ENCODE measurements at regions of chr6 and their contacts with region 1.

Region 1: GRCh38 chr6:135535989-135536414 is 38.5 kb upstream of the AHI1 start:
- DNase-seq: peak; percentile 78
- ATAC-seq: peak; percentile 48
- H3K4me3 ChIP-seq: no peak overlapping the region
- H3K27ac ChIP-seq: no peak overlapping the region
- H3K4me1 ChIP-seq: peaks cover 34% of the 10 kb centered on the region
- H3K27me3 ChIP-seq: no peaks in the 10 kb centered on the region
- CTCF ChIP-seq: peak; percentile 74

Region 2: GRCh38 chr6:135451693-135452092 is 84.3 kb before region 1 on chr6:
- CTCF ChIA-PET with region 1: no interaction called
- POLR2A ChIA-PET with region 1: no interaction called
- intact Hi-C with region 1: loop called (anchors 1 kb)
- DNase-seq: peak; percentile 68
- ATAC-seq: no peak
- H3K4me3 ChIP-seq: no peak overlapping the region
- H3K27ac ChIP-seq: no peak overlapping the region
- H3K4me1 ChIP-seq: no peaks in the 10 kb centered on the region
- H3K27me3 ChIP-seq: no peaks in the 10 kb centered on the region
- CTCF ChIP-seq: peak; percentile 71

Region 3: DNA sequence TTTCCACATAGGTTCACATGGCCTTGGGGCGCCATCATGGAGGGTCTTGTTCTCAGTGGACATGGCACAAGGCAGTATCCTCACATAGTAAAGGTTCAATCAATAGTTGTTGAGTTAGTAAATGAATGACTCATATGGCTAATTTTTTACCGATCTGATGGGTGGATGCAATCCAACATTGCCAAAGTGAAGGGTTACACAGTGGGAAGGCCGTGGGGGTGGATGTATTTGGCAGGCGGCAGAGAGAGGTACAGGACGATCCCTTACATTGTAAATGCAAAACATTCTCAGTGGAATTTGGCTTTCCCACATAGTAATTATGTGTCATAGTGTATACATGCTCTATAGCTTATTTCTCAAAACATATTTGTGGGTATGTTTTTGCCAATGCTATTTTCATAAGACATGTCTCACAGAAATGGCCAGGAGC is 294.5 kb after region 1 on chr6:
- CTCF ChIA-PET with region 1: no interaction called
- POLR2A ChIA-PET with region 1: no interaction called
- intact Hi-C with region 1: loop called (anchors 5 kb)
- DNase-seq: peak; percentile 68
- ATAC-seq: peak; percentile 43
- H3K4me3 ChIP-seq: no peak overlapping the region
- H3K27ac ChIP-seq: peak overlapping the region; percentile 16; the same call in 1 of the 2 replicates
- H3K4me1 ChIP-seq: 0 out of 2 replicates have a peak, but pooled peaks cover 10% of the 10 kb centered on the region
- H3K27me3 ChIP-seq: no peaks in the 10 kb centered on the region
- CTCF ChIP-seq: no peak

Region 4: DNA sequence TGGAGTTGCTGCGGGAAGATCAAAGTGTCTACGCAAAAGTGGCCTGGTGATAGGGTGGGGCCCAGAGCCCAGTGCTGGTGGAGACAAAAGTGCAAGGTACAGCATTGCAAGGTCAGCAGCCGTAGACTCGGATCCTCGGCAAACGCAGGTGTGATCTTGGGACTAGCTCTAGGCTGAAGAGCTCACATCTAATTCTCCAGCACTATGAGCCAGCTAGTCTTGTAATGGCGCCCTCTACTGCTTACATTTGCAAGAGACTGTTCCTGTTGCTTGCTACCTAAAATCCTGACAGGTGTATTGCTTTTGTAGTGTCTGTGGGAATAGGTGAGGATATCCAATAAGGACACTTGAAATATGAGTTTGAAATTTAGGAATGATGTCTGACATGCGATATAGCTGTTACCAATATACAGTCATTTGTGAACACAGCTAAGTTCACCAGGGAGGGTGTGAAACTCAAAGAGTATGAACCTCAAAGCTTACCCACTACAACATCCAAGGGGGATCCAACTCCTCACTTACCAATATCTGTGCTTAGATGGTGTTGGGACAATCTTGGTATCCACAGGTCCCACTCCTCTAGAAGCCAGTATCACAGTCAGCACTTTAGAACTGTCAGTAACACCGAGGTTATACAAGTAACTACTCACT is 373.9 kb after region 1 on chr6:
- CTCF ChIA-PET with region 1: no interaction called
- POLR2A ChIA-PET with region 1: no interaction called
- intact Hi-C with region 1: loop called (anchors 2 kb)
- DNase-seq: peak; percentile 74
- ATAC-seq: peak; percentile 59
- H3K4me3 ChIP-seq: no peak overlapping the region
- H3K27ac ChIP-seq: no peak overlapping the region
- H3K4me1 ChIP-seq: peaks cover 2% of the 10 kb centered on the region
- H3K27me3 ChIP-seq: no peaks in the 10 kb centered on the region
- CTCF ChIP-seq: peak; percentile 70

Region 5: GRCh38 chr6:135962731-135963130 is 426.7 kb after region 1 on chr6:
- CTCF ChIA-PET with region 1: no interaction called
- POLR2A ChIA-PET with region 1: no interaction called
- intact Hi-C with region 1: no loop called
- DNase-seq: no peak
- ATAC-seq: no peak
- H3K4me3 ChIP-seq: no peak overlapping the region
- H3K27ac ChIP-seq: no peak overlapping the region
- H3K4me1 ChIP-seq: no peaks in the 10 kb centered on the region
- H3K27me3 ChIP-seq: no peaks in the 10 kb centered on the region
- CTCF ChIP-seq: no peak

Region 6: DNA sequence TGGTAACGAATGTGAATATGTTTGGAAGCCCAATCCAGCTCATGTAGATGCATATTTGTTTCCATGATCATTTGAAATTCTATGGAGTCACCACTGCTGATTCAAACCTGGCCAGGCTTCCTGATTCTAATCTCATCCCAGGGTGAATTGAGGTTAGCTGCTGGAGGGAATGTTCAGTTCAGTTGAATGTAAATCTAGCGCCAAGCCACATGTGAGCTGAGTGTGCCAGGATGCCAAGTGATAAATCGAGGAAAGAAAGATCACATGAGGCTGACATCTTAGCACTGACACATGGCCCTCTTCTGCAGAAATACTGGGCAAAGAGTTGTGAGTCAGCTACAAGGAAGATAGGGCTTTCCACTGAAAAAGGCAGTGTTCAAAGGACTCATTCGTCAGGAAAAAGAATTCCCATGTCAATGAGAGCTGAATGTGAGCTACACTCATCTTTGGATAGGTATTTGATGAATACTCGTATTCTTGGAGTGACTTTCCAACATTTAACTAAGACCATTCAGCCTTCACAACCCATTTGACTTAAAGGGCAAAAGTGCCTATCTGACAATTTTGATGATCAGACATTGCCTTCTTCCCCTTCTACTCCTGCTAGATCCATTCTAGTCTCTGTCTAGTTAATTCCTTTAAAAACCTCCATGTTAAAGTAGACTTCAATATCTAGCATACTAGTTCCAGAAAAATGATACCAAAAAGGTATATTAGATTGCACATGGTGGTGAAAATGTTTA is 542.0 kb after region 1 on chr6:
- CTCF ChIA-PET with region 1: no interaction called
- POLR2A ChIA-PET with region 1: no interaction called
- intact Hi-C with region 1: loop called (anchors 5 kb)
- DNase-seq: peak; percentile 33
- ATAC-seq: no peak
- H3K4me3 ChIP-seq: no peak overlapping the region
- H3K27ac ChIP-seq: no peak overlapping the region
- H3K4me1 ChIP-seq: no peaks in the 10 kb centered on the region
- H3K27me3 ChIP-seq: no peaks in the 10 kb centered on the region
- CTCF ChIP-seq: no peak